Heart right ventricle (tissue), 16 donors: ENCODE measurements at regions of chr18 and their contacts with region 1.

Region 1: GRCh38 chr18:26804519-26804918 is 61.0 kb downstream of the AQP4 start:
- DNase-seq: no peak
- ATAC-seq: peak in 3 of 8 donors; percentile 33 to 41 (median 37)
- H3K4me3 ChIP-seq: no peak overlapping the region
- H3K27ac ChIP-seq: no peak overlapping the region
- H3K4me1 ChIP-seq: no peaks in the 10 kb centered on the region
- H3K27me3 ChIP-seq: peaks cover 0 to 6% (median 0%) of the 10 kb centered on the region in 7 donors
- CTCF ChIP-seq: peak in 7 of 9 donors; percentile 39 to 59 (median 49)

Region 2: GRCh38 chr18:26307189-26307773 is 497.2 kb before region 1 on chr18:
- intact Hi-C with region 1: loop called in 1 of 10 experiments (anchors 10 kb)
- DNase-seq: peak in 1 of 2 donors; percentile 8
- ATAC-seq: no peak
- H3K4me3 ChIP-seq: no peak overlapping the region
- H3K27ac ChIP-seq: no peak overlapping the region
- H3K4me1 ChIP-seq: no peaks in the 10 kb centered on the region
- H3K27me3 ChIP-seq: no peaks in the 10 kb centered on the region
- CTCF ChIP-seq: peak; percentile 25 to 72 (median 60)

Region 3: GRCh38 chr18:26487437-26487836 is 317.1 kb before region 1 on chr18:
- intact Hi-C with region 1: no loop called
- DNase-seq: no peak
- ATAC-seq: no peak
- H3K4me3 ChIP-seq: no peak overlapping the region
- H3K27ac ChIP-seq: no peak overlapping the region
- H3K4me1 ChIP-seq: no peaks in the 10 kb centered on the region
- H3K27me3 ChIP-seq: no peaks in the 10 kb centered on the region
- CTCF ChIP-seq: no peak

Region 4: DNA sequence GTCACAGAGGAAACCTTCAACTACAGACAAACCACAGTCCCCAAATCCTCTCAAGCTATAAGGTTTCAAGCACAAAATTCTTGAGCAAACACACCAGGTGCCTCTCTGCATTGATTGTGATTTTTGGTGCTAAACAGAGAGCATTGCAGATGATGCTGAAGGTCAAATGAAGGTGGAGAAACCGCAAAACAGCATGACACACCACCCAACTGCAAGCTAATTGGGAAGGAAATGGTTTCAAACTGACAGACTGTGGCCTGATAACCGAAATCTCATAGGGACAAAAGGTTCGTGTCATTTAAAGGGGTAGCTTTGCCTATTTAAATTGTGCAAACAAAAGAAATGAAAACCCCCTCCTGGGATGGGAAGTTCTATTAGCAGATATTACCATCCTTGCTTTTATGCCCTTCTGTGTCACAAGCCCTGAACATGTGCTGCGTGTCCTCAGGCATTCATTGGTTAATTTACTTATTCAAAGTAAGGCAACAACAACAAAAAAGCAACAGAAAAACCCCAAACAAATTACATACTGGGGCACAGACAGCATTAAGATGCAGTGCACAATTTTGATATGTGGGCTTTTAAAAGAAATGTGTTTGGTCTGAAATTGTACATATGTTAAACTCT is 93.9 kb before region 1 on chr18:
- intact Hi-C with region 1: no loop called
- DNase-seq: no peak
- ATAC-seq: no peak
- H3K4me3 ChIP-seq: no peak overlapping the region
- H3K27ac ChIP-seq: no peak overlapping the region
- H3K4me1 ChIP-seq: peaks cover 0 to 18% (median 0%) of the 10 kb centered on the region in 9 donors
- H3K27me3 ChIP-seq: peaks cover 0 to 13% (median 6%) of the 10 kb centered on the region in 7 donors
- CTCF ChIP-seq: no peak

Region 5: DNA sequence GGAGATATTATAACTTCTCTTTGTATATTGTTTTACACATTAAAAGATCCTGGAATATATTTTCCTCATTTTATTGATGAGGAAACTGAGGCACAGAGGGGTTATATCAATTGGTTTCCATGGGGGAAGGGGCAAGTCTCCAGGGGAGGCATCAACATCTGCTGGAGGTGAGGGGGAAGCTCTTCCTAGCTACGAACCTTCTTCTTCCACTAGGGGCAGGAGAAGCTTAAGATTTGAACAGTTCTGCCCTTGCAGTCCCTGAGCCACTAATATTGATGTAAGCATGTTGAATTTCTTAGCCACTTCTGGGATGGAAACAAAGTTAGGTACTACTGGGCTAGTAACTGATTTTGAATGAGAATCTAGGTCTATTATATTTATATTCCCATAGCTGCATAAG is 201.1 kb after region 1 on chr18:
- intact Hi-C with region 1: loop called in 3 of 10 experiments (anchors 10 kb)
- DNase-seq: no peak
- ATAC-seq: no peak
- H3K4me3 ChIP-seq: no peak overlapping the region
- H3K27ac ChIP-seq: no peak overlapping the region
- H3K4me1 ChIP-seq: no peaks in the 10 kb centered on the region
- H3K27me3 ChIP-seq: peaks cover 0 to 4% (median 0%) of the 10 kb centered on the region in 7 donors
- CTCF ChIP-seq: peak; percentile 2 to 38 (median 20)